Kidney (tissue), 22 donors: ENCODE measurements at regions of chr7 and their contacts with region 1.

Region 1: GRCh38 chr7:99040104-99040958 is 103.6 kb downstream of the SMURF1 start:
- DNase-seq: peak; percentile 82 to 96 (median 88)
- H3K4me3 ChIP-seq: no peak overlapping the region
- H3K27ac ChIP-seq: peak overlapping the region; percentile 9 to 33
- H3K4me1 ChIP-seq: peaks cover 0 to 7% (median 3%) of the 10 kb centered on the region in 3 donors
- H3K27me3 ChIP-seq: no peaks in the 10 kb centered on the region
- CTCF ChIP-seq: peak; percentile 71

Region 2: DNA sequence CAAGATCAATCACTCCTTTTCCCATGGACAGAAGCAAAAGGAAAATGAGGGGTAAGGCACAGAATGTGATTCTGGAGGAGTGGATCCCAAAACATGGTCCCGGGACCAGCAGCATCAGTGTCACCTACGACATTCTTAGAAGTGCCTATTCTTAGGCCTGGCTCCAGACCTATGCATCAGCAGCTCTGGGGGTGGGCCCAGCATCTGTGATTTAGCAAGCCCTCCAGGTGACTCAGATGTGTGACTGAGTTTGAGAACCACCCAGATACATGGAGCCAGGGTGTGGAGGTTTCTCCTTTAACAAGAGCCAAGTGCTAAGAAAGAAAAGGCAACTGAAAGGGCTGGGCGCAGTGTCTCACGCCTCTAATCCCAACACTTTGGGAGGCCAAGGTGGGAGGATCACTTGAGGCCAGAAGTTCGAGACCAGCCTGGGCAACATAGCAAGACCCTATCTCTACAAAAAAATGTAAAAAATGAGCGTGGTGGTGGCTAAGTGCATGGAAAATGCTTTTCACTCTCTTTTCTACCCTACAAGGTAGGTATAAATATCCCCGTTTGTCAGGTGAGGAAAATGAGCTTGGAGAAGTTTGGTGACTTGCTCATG is 268.2 kb after region 1 on chr7:
- intact Hi-C with region 1: loop called (anchors 5 kb)
- DNase-seq: no peak
- H3K4me3 ChIP-seq: no peak overlapping the region
- H3K27ac ChIP-seq: no peak overlapping the region
- H3K4me1 ChIP-seq: no peaks in the 10 kb centered on the region
- H3K27me3 ChIP-seq: no peaks in the 10 kb centered on the region
- CTCF ChIP-seq: no peak